ENCODE measurements at regions of chr12 and their contacts with region 1.

Region 1: GRCh38 chr12:47397664-47398281 is 308.1 kb downstream of the RPAP3 start:
- DNase-seq: peak; percentile 75
- ATAC-seq: peak; percentile 88
- H3K4me3 Mint-ChIP-seq: no peak overlapping the region
- H3K27ac Mint-ChIP-seq: peak overlapping the region; percentile 87
- H3K4me1 Mint-ChIP-seq: peaks cover 71% of the 10 kb centered on the region
- H3K27me3 Mint-ChIP-seq: no peaks in the 10 kb centered on the region

Region 2: GRCh38 chr12:47071241-47071852 is 326.4 kb before region 1 on chr12:
- CTCF ChIA-PET with region 1: interaction called, 15 read pairs
- DNase-seq: no peak
- ATAC-seq: peak; percentile 33
- H3K4me3 Mint-ChIP-seq: no peak overlapping the region
- H3K27ac Mint-ChIP-seq: no peak overlapping the region
- H3K4me1 Mint-ChIP-seq: peaks cover 11% of the 10 kb centered on the region
- H3K27me3 Mint-ChIP-seq: no peaks in the 10 kb centered on the region

Region 3: GRCh38 chr12:47194501-47194900 is 203.3 kb before region 1 on chr12:
- CTCF ChIA-PET with region 1: interaction called, 28 read pairs
- DNase-seq: no peak
- ATAC-seq: no peak
- H3K4me3 Mint-ChIP-seq: no peak overlapping the region
- H3K27ac Mint-ChIP-seq: peak overlapping the region; percentile 88
- H3K4me1 Mint-ChIP-seq: peaks cover 56% of the 10 kb centered on the region
- H3K27me3 Mint-ChIP-seq: no peaks in the 10 kb centered on the region

Region 4: DNA sequence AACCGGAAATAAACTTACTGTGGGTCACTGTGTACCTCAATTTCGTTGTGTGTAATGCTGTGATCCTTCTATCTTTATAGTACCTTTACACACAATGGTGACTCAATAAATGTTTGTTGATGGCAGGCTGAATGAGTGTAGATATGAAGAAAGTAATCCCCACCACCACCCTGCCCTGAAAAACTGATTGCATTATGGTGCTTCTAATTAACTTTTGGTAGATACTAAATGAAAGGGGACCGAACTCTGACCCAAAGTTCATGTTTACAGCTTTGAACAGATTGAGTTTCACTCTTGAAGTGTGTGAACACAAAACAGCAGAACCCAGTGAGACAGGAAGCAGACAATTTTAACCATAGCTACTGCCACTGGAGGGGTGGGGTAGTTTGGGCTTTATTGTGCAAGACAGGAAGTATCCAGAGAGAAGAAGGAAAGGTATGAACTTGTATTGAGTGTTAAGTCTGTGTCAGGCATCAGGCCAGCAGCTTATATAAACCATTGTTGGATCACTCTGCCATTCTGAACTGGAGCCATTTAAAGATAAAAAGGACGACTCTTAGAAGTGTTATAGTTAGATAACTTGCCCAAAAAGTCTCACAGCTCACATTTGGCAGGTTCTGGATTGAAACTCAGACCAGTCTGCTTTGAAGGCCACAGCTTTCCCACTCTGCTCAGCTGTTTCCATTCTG is 121.0 kb before region 1 on chr12:
- CTCF ChIA-PET with region 1: interaction called, 11 read pairs
- DNase-seq: peak; percentile 83
- ATAC-seq: peak; percentile 96
- H3K4me3 Mint-ChIP-seq: peak overlapping the region; percentile 44
- H3K27ac Mint-ChIP-seq: peak overlapping the region; percentile 91
- H3K4me1 Mint-ChIP-seq: peaks cover 46% of the 10 kb centered on the region
- H3K27me3 Mint-ChIP-seq: no peaks in the 10 kb centered on the region

Region 5: GRCh38 chr12:47346251-47347019 is 51.3 kb before region 1 on chr12:
- CTCF ChIA-PET with region 1: interaction called, 13 read pairs
- DNase-seq: no peak
- ATAC-seq: no peak
- H3K4me3 Mint-ChIP-seq: no peak overlapping the region
- H3K27ac Mint-ChIP-seq: no peak overlapping the region
- H3K4me1 Mint-ChIP-seq: peaks cover 27% of the 10 kb centered on the region
- H3K27me3 Mint-ChIP-seq: no peaks in the 10 kb centered on the region

Region 6: GRCh38 chr12:47367912-47368537 is 29.7 kb before region 1 on chr12:
- CTCF ChIA-PET with region 1: interaction called, 55 read pairs
- DNase-seq: no peak
- ATAC-seq: peak; percentile 27
- H3K4me3 Mint-ChIP-seq: no peak overlapping the region
- H3K27ac Mint-ChIP-seq: no peak overlapping the region
- H3K4me1 Mint-ChIP-seq: peaks cover 10% of the 10 kb centered on the region
- H3K27me3 Mint-ChIP-seq: no peaks in the 10 kb centered on the region

Region 7: GRCh38 chr12:47509398-47509851 is 111.7 kb after region 1 on chr12:
- CTCF ChIA-PET with region 1: no interaction called
- DNase-seq: no peak
- ATAC-seq: no peak
- H3K4me3 Mint-ChIP-seq: no peak overlapping the region
- H3K27ac Mint-ChIP-seq: no peak overlapping the region
- H3K4me1 Mint-ChIP-seq: peaks cover 7% of the 10 kb centered on the region
- H3K27me3 Mint-ChIP-seq: no peaks in the 10 kb centered on the region